ENCODE measurements at regions of chr11 and their contacts with region 1.

Region 1: GRCh38 chr11:50030193-50030592 is 2.5 kb upstream of the OR4C45 start:
- DNase-seq: no peak
- H3K4me3 ChIP-seq: no peak overlapping the region
- H3K27ac ChIP-seq: no peak overlapping the region
- H3K4me1 ChIP-seq: no peaks in the 10 kb centered on the region
- H3K27me3 ChIP-seq: no peaks in the 10 kb centered on the region
- CTCF ChIP-seq: no peak

Region 2: GRCh38 chr11:48354677-48355076 is 1675.5 kb before region 1 on chr11:
- intact Hi-C with region 1: loop called (anchors 5 kb)
- DNase-seq: no peak
- H3K4me3 ChIP-seq: no peak overlapping the region
- H3K27ac ChIP-seq: no peak overlapping the region
- H3K4me1 ChIP-seq: no peaks in the 10 kb centered on the region
- H3K27me3 ChIP-seq: no peaks in the 10 kb centered on the region
- CTCF ChIP-seq: no peak

Measured in ascending aorta (tissue), 2 donors.